OCI-LY7 (cell line): ENCODE measurements at regions of chr2 and their contacts with region 1.

Region 1: DNA sequence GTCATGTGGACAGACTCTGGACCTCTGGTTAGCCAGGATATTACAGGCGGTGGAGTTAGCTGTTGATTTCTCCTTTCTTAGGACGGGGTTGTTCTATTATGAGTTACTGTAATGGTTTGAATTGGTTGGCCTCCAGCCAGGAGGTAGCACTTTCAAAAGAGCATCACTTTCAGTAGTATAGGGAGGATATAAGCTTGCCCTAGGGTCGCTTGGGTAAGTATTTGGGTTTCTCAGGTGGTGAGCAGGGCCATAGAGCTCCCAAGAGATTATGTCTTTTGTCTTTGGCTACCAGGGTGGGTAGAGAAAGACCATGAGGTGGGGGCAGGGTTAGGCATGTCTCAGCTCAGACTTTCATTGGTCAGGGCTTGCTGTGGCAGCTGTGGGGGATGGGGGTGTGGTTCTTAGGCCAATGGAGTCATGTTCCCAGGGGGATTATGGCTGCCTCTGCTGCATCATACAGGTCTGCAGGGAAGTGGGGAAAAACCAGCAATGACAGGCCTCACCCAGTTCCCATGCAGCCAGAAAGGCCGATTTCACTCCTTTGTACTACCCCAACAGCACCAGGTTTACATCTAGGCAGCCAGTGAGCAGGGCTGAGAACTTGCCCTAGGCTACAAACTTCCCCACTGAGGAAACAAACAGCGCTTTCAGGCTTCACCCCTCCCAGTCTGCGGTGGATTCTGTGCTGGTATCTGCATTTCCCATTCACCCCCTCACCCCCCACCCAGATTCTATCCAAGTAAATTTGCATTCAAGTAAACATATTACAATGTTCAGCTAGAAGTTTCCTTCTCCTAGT is 89.4 kb upstream of the SLC38A11 start:
- DNase-seq: peak; percentile 62
- H3K4me3 ChIP-seq: no peak overlapping the region
- H3K27ac ChIP-seq: peak overlapping the region; percentile 51
- H3K4me1 ChIP-seq: no peaks in the 10 kb centered on the region
- CTCF ChIP-seq: no peak

Region 2: GRCh38 chr2:165022781-165023180 is 21.9 kb before region 1 on chr2:
- CTCF ChIA-PET with region 1: no interaction called
- POLR2A ChIA-PET with region 1: no interaction called
- intact Hi-C with region 1: no loop called
- DNase-seq: no peak
- H3K4me3 ChIP-seq: no peak overlapping the region
- H3K27ac ChIP-seq: no peak overlapping the region
- H3K4me1 ChIP-seq: no peaks in the 10 kb centered on the region
- CTCF ChIP-seq: no peak

Region 3: DNA sequence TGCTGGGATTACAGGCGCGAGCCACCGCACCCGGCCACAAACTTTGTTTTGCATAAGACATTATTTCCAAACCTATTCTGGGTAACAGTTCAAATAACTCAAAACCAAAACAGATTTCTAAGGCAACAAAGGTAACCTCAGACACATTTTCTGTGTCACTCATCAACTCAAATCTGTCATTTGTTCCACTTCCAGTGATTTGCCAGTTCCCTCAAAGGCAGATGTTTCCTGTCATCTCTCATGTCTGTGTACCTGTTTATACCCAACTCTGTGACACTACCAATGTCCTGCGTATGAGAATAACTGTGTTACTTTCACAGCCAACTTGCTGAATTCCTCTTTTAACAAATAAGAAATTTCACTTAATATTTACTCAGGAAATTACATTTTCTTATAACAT is 104.7 kb after region 1 on chr2:
- CTCF ChIA-PET with region 1: no interaction called
- POLR2A ChIA-PET with region 1: no interaction called
- intact Hi-C with region 1: loop called (anchors 5 kb)
- DNase-seq: no peak
- H3K4me3 ChIP-seq: no peak overlapping the region
- H3K27ac ChIP-seq: no peak overlapping the region
- H3K4me1 ChIP-seq: peaks cover 3% of the 10 kb centered on the region
- CTCF ChIP-seq: no peak